SK-N-SH (cell line): ENCODE measurements at regions of chr7 and their contacts with region 1.

Region 1: DNA sequence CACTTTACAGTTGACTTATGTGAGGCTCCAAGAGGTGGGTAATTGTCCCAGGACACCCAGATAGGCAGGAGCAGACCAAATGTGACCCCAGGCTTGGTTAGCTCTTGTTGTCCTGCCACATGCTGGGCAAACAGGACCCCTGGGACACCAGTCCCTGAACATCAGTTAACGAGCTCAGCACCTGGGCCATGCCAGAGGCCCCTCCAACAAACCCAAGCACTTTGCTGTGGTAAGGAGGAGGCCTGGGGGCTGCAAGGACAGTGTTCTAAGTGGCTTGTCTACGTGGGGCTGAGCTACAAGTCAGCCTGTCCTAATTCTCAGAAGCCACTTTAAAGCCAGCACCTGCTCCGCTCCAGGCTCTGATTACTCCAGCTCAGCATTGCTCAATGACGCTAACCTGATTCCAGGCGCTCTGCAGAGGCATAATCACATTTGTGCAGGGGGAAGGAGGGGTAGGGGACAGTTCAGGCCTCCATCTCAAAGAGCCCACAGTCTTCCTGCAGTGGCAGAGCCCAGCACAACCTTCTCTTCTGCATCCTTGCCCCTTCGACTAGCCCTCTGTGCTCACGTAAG is 57.2 kb downstream of the DDC start:
- DNase-seq: peak; percentile 86
- H3K4me3 ChIP-seq: no peak overlapping the region
- H3K27ac ChIP-seq: peak overlapping the region in 1 of 2 experiments; percentile 98; a peak in 3 of 4 replicates
- H3K4me1 ChIP-seq: peaks cover 0 to 62% of the 10 kb centered on the region in 2 experiments; a peak in 2 of 4 replicates
- H3K27me3 ChIP-seq: peaks cover 15% of the 10 kb centered on the region; the same call in 1 of the 2 replicates
- CTCF ChIP-seq: no peak
- EP300 ChIP-seq: peak in 1 of 2 experiments; percentile 98; a peak in 2 of 4 replicates
- RAD21 ChIP-seq: peak; percentile 33

Region 2: DNA sequence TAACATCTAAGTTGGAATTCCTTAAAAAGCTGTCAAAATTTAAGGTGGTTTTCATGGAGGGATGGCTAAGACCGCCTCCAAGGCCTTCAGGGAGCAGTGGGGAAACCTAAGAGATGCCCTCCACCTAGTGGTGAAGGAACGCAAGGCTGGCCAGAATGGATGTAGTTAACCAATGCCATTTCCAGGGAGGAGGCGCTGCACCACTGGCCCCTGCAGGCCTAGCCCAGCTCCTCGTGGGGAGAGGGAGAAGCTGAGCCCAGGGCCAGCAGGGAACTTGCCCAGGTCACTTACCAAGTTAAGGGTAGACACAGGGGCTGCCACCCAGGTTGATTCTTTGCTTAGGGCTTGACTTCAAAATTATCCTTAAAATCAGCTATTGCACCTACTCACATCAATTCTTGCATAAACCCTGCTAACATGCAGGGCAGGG is 89.9 kb before region 1 on chr7:
- CTCF ChIA-PET with region 1: no interaction called
- POLR2A ChIA-PET with region 1: no interaction called
- DNase-seq: peak; percentile 86
- H3K4me3 ChIP-seq: no peak overlapping the region
- H3K27ac ChIP-seq: no peak overlapping the region
- H3K4me1 ChIP-seq: peaks cover 0 to 10% of the 10 kb centered on the region in 2 experiments; a peak in 1 of 4 replicates
- H3K27me3 ChIP-seq: no peaks in the 10 kb centered on the region
- CTCF ChIP-seq: peak; percentile 96
- EP300 ChIP-seq: no peak
- RAD21 ChIP-seq: peak; percentile 98

Region 3: GRCh38 chr7:50475340-50475739 is 32.6 kb before region 1 on chr7:
- CTCF ChIA-PET with region 1: interaction called, 7 read pairs
- POLR2A ChIA-PET with region 1: interaction called, 11 read pairs
- DNase-seq: no peak
- H3K4me3 ChIP-seq: no peak overlapping the region
- H3K27ac ChIP-seq: peak overlapping the region in 1 of 2 experiments; percentile 76; a peak in 2 of 4 replicates
- H3K4me1 ChIP-seq: peaks cover 0 to 64% of the 10 kb centered on the region in 2 experiments; a peak in 1 of 4 replicates
- H3K27me3 ChIP-seq: peaks cover 22% of the 10 kb centered on the region; the same call in 1 of the 2 replicates
- CTCF ChIP-seq: no peak
- EP300 ChIP-seq: no peak
- RAD21 ChIP-seq: no peak

Region 4: DNA sequence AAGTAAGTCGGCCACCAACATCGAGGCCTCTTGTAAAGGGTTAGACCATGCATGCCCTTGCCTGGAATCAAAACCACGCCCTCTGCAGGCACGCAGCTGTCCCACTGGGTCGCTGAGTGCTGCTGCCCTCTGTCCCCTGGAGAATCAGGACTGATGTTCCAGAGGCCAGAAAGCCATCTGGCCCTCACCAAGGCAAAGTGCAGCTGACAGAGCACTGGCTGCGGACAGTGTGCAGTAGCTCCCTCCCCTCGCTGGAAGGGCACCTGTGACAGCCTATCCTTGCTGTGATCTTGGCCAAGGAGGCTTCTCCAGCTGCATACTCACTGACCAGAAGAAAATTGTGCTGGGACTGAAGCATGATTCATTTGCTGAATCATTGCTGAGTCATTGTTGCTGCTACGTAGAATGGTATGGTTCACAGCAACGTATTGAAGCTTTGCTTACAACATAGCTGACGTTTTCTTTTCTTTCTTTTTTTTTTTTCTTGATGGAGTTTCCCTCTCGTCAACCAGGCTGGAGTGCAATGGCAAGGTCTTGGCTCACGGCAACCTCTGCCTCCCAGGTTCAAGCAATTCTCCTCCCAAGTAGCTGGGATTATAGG is 26.8 kb after region 1 on chr7:
- CTCF ChIA-PET with region 1: interaction called, 16 read pairs
- POLR2A ChIA-PET with region 1: interaction called, 39 read pairs
- DNase-seq: peak; percentile 67
- H3K4me3 ChIP-seq: no peak overlapping the region
- H3K27ac ChIP-seq: peak overlapping the region; percentile 85 to 99
- H3K4me1 ChIP-seq: peaks cover 8 to 75% of the 10 kb centered on the region in 2 experiments; a peak in 3 of 4 replicates
- H3K27me3 ChIP-seq: 0 out of 2 replicates have a peak, but pooled peaks cover 7% of the 10 kb centered on the region
- CTCF ChIP-seq: peak; percentile 43
- EP300 ChIP-seq: peak; percentile 54 to 67; a peak in 2 of 4 replicates
- RAD21 ChIP-seq: peak; percentile 53

Region 5: DNA sequence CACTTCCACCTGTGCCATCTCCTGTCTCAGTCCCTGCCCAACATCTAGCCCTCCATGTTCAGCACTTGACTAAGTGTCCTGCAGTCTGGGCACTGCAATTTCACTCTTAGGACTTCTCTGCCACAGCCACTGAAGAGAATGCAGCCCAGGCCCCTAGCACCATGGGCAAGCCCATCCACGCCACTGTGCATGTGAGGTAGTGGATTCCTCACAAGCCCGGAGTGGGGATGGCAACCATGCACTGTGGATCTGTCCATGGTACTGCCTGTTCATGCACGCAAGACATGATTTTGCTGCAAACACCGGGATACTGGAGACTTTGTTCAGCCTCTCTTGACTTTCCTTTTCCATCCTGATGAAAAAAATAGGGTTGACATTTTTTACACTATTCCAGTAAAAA is 44.9 kb after region 1 on chr7:
- CTCF ChIA-PET with region 1: interaction called, 6 read pairs
- POLR2A ChIA-PET with region 1: interaction called, 103 read pairs
- DNase-seq: no peak
- H3K4me3 ChIP-seq: no peak overlapping the region
- H3K27ac ChIP-seq: peak overlapping the region in 1 of 2 experiments; percentile 17; a peak in 1 of 4 replicates
- H3K4me1 ChIP-seq: peaks cover 0 to 44% of the 10 kb centered on the region in 2 experiments; a peak in 2 of 4 replicates
- H3K27me3 ChIP-seq: peaks cover 28% of the 10 kb centered on the region
- CTCF ChIP-seq: no peak
- EP300 ChIP-seq: no peak
- RAD21 ChIP-seq: no peak

Region 6: DNA sequence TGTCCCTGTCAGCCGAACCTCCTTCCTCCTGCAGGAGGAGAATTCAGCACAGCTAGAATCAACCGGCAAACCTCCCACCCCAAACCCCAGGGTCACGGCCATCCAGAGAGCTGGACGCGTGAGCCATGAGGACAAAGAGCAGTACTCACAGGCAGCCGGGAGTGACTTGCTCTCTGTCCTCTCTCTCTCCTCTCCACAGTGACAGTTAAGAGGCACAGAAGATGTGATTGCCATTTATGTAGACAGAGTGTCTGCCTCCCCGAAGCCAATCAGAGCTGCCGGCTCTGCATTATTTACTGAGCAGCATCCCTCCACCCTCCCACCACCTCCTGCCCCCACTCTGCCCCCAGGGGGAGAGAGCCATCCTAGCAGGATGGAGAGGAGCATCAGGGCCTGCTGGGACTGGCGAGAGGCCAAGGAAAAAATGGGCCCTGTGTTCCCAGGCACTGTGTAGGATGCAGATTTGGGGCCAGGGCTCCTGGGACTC is 52.9 kb after region 1 on chr7:
- CTCF ChIA-PET with region 1: interaction called, 38 read pairs
- POLR2A ChIA-PET with region 1: interaction called, 103 read pairs
- DNase-seq: peak; percentile 91
- H3K4me3 ChIP-seq: peak overlapping the region; percentile 28 to 55; a peak in 3 of 4 replicates
- H3K27ac ChIP-seq: peak overlapping the region in 1 of 2 experiments; percentile 99; a peak in 2 of 4 replicates
- H3K4me1 ChIP-seq: peaks cover 0 to 66% of the 10 kb centered on the region in 2 experiments; a peak in 2 of 4 replicates
- H3K27me3 ChIP-seq: peaks cover 60% of the 10 kb centered on the region
- CTCF ChIP-seq: no peak
- EP300 ChIP-seq: peak in 1 of 2 experiments; percentile 85; a peak in 2 of 4 replicates
- RAD21 ChIP-seq: peak; percentile 25